Activated CD4-positive, alpha-beta memory T cell treated with anti-CD3 and anti-CD28 coated beads for 36 hours (primary cell): ENCODE measurements at regions of chr2 and their contacts with region 1.

Region 1: DNA sequence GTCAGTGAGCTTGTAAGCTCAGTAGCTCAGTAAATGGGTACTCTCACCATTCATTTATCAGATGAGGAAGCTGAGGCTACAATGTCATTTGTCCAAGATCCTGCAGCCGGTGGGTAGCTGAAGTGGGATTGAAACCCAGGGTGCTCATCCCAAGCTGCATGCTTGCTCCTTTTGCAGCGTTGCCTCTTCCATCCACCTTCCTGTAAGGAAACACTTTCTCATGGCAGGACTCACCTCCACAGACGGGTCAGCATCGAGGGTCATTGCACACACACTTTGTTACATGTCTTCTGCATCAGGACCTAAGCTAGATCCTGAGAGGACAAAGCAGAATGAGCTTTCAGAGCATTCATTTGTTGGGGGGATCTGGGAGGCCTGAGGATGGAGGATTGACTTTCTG is 60.7 kb downstream of the ACOXL start:
- DNase-seq: no peak
- H3K4me3 Mint-ChIP-seq: no peak overlapping the region
- H3K27ac Mint-ChIP-seq: no peak overlapping the region
- H3K4me1 Mint-ChIP-seq: no peaks in the 10 kb centered on the region
- H3K27me3 Mint-ChIP-seq: peaks cover 59% of the 10 kb centered on the region

Region 2: DNA sequence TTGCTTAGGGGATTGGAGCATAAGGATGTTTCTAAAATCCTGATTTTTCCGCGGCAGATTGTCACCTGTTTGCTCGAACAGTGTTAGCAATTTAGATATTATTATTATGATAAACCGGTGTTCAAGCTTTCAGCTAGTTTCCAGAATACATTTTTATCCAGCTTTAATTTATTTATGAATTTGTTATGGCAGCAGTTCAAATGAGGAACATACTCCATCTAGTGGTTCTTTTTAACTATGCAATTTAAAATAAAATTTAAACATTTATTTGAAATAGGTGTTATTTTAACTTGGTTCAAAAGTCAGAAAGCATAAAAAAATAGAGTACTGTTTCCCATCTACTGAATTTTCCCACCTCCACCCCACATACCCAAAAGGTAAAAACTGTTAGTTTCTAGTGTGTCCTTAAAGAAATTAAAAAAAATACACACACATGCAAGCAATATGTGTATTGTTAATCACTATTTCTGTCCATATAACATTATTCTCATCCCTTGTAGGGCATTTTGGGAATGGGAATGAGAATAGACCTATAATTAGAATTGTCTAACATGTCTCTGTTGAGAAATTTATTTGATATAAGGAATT is 37.4 kb before region 1 on chr2:
- CTCF ChIA-PET with region 1: interaction called, 10 read pairs
- POLR2A ChIA-PET with region 1: no interaction called
- intact Hi-C with region 1: no loop called
- DNase-seq: no peak
- H3K4me3 Mint-ChIP-seq: no peak overlapping the region
- H3K27ac Mint-ChIP-seq: no peak overlapping the region
- H3K4me1 Mint-ChIP-seq: no peaks in the 10 kb centered on the region
- H3K27me3 Mint-ChIP-seq: peaks cover 32% of the 10 kb centered on the region